HEK293 (cell line): ENCODE measurements at regions of chr14 and their contacts with region 1.

Region 1: DNA sequence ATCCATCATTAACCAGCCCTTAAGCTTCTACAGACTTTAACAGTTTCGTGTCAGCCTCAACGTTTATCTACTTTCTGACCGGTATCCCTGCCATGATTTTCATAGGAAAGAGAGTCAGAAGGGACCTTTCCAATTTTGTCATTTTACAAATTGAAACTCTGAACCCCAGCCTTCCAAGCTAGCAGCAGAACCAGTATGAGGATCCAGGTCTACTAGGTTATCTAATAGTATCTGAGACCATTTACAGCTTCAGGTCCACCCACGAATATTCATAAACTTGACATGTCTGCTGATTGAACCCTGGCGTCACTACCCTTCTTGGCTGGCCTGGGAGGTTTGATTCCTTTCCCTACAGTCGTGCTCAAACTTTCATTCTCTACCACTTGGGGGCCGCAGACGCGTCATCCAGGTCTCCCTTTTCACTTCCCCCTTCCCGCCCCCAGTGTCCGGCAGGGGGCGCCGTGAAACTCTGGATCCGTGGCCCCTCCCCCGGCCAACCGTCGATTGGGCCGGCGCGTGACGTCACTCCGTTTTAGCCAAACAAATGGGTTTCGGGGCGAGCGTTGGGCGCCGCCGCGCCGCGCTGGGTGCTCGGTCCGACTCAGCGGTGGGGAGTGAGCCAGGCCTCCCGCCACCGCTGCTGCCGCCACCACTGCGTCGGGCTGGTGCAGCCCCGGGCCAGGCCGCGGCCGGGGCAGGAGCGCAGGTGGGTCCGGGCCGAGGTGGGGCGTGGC is at the start of gene FBXO34:
- H3K4me3 ChIP-seq: peak within 1 kb of the TSS; percentile 100
- H3K27ac ChIP-seq: peak within 1 kb of the TSS; percentile 73
- H3K4me1 ChIP-seq: peaks cover 4% of the 10 kb centered on the region; the same call in 1 of the 2 replicates
- CTCF ChIP-seq: peak; percentile 97

Region 2: DNA sequence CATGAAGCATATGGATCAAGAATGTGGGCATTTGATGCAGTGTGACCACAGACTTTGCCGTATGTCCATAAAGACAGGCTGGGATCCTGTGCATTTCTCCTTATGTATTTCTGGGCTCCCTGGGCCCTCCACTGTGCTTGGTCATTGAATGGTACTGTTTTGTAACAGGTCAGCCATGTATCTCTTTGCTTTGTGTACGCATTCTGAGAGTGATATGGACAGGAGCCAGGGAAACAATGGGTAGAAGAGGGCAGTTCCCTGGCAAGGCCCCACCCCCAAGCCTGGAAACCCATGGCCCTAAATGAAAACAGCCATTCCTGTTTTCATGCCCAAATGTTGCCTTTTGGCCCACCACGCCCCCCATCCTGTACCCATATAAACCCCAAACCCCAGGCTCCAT is 15.0 kb before region 1 on chr14:
- CTCF ChIA-PET with region 1: interaction called, 32 read pairs
- POLR2A ChIA-PET with region 1: no interaction called
- H3K4me3 ChIP-seq: no peak overlapping the region
- H3K27ac ChIP-seq: no peak overlapping the region
- H3K4me1 ChIP-seq: no peaks in the 10 kb centered on the region
- CTCF ChIP-seq: no peak

Region 3: DNA sequence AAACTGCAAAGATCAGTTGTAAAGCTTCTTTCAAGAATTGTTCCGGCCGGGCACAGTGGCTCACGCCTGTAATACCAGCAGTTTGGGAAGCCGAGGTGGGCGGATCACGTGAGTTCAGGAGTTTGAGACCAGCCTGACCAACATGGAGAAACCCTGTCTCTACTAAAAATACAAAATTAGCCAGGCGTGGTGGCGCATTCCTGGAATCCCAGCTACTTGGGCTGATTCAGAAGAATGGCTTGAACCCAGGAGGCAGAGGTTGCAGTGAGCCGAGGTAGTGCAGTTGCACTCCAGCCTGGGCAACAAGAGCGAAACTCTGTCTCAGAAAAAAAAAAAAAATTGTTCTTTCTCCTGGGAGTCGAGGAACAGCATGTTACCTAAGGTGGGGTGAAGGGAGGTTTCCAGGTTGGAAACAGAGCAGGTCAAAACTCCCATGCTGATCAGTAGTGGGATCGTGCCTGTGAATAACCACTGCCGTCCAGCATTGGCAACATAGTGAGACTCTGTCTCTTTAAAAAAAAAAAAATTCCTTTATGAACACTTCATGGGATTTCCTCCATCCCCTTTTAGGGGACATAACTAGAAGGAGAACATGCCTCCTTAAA is 14.2 kb after region 1 on chr14:
- CTCF ChIA-PET with region 1: interaction called, 14 read pairs
- POLR2A ChIA-PET with region 1: no interaction called
- H3K4me3 ChIP-seq: no peak overlapping the region
- H3K27ac ChIP-seq: no peak overlapping the region
- H3K4me1 ChIP-seq: peaks cover 9% of the 10 kb centered on the region
- CTCF ChIP-seq: no peak

Region 4: GRCh38 chr14:55347040-55347439 is 76.0 kb after region 1 on chr14:
- CTCF ChIA-PET with region 1: interaction called, 14 read pairs
- POLR2A ChIA-PET with region 1: no interaction called
- H3K4me3 ChIP-seq: no peak overlapping the region
- H3K27ac ChIP-seq: no peak overlapping the region
- H3K4me1 ChIP-seq: peaks cover 8% of the 10 kb centered on the region; the same call in 1 of the 2 replicates
- CTCF ChIP-seq: no peak

Region 5: GRCh38 chr14:55354500-55354899 is 83.5 kb after region 1 on chr14:
- CTCF ChIA-PET with region 1: interaction called, 24 read pairs
- POLR2A ChIA-PET with region 1: interaction called, 5 read pairs
- H3K4me3 ChIP-seq: no peak overlapping the region
- H3K27ac ChIP-seq: no peak overlapping the region
- H3K4me1 ChIP-seq: no peaks in the 10 kb centered on the region
- CTCF ChIP-seq: peak; percentile 30; the same call in 1 of the 2 replicates